ENCODE measurements at regions of chr2 and their contacts with region 1.

Region 1: GRCh38 chr2:68653538-68653982 is 10.2 kb downstream of the PROKR1 start:
- DNase-seq: peak; percentile 72

Region 2: DNA sequence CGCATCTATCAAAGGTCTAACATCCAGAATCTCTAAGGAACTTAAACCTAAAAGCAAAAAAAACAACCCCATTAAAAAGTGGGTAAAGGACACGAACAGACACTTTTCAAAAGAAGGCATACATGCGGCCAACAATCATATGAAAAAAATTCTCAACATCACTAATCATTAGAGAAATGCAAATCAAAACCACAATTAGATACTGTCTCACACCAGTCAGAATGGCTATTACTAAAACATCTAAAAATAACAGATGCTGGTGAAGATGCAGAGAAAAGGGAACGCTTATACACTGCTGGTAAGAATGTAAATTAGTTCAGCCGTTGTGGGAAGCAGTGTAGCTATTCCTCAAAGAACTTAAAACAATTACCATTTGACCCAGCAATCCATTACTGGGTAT is 439.2 kb before region 1 on chr2:
- in situ Hi-C with region 1: no loop called
- DNase-seq: no peak

Region 3: DNA sequence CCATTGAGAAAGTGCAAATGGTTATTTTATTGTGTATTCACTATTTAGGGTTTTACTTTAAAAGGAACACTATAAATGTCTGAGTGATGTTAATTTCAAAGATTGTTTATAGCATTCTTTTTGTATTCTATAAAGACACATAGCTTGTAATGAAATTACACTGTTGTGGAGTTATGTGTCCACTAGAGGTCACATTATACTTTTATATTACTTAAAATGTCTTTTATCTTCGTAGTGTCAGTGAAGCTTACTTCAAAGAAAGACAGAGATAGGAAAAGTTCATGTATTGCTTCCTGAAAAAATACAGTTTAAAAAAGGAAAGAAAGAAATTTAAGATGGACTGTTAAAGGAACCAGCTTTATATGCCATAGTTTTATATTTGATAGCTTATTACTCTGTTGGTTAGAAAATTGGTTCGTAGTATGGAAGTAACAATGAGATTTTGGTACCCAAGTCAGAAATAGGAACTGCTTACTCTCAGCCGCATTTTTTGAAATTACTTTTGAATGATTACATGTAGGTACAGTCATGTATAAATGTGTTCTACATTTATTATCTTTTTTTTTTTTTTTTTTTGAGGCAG is 165.7 kb before region 1 on chr2:
- in situ Hi-C with region 1: loop called (anchors 25 kb)
- DNase-seq: peak; percentile 57

Measured in KBM-7 (cell line).